Left colon (tissue), 2 donors: ENCODE measurements at regions of chr4 and their contacts with region 1.

Region 1: GRCh38 chr4:39134683-39135319 is 47.5 kb upstream of the WDR19 start:
- DNase-seq: no peak
- ATAC-seq: no peak

Region 2: DNA sequence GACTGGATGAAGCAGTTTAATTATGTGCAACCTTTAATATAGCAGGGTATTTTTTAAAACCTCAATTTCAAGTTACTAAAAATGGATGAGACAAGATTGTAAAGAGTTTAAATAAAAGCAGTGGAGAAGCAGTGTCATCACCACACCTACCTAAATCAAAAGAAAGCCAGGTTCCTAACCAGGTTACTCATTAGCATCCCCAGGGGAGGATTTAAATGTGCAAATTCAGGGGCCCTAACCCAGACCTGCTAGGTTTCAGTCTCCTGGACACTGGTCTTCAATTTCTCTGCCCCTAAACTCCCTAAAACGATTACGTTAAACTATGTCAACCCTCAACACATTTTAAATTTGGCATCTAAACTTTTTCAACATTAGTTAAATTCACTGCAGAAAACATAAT is 587.7 kb before region 1 on chr4:
- intact Hi-C with region 1: no loop called
- DNase-seq: no peak
- ATAC-seq: no peak

Region 3: GRCh38 chr4:38768968-38769394 is 365.8 kb before region 1 on chr4:
- intact Hi-C with region 1: loop called in 1 of 2 experiments (anchors 10 kb)
- DNase-seq: no peak
- ATAC-seq: no peak

Region 4: GRCh38 chr4:38894340-38894982 is 240.3 kb before region 1 on chr4:
- intact Hi-C with region 1: loop called in 1 of 2 experiments (anchors 10 kb)
- DNase-seq: no peak
- ATAC-seq: no peak

Region 5: DNA sequence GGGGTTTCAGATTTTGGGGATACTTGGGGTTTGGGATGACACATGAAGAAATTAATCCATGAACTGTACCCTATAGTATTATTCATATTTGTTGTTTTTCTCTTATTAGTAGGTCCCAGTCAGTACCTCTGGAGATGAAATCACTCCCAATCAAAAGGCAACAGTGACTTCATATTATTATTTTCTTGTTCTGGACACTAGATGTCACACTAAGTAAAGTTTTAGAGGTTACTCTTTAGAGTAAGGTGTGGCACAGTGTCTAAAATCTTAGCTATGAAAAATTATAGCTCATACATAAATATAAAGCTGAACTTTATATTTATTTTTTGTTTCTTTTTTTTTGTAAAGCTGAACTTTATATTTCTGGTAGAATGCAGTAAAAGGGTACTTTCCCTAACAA is 232.1 kb before region 1 on chr4:
- intact Hi-C with region 1: loop called (anchors 2 to 10 kb)
- DNase-seq: no peak
- ATAC-seq: peak; percentile 68

Region 6: GRCh38 chr4:39083164-39083563 is 51.6 kb before region 1 on chr4:
- intact Hi-C with region 1: no loop called
- DNase-seq: no peak
- ATAC-seq: no peak